ENCODE measurements at regions of chr10 and their contacts with region 1.

Region 1: DNA sequence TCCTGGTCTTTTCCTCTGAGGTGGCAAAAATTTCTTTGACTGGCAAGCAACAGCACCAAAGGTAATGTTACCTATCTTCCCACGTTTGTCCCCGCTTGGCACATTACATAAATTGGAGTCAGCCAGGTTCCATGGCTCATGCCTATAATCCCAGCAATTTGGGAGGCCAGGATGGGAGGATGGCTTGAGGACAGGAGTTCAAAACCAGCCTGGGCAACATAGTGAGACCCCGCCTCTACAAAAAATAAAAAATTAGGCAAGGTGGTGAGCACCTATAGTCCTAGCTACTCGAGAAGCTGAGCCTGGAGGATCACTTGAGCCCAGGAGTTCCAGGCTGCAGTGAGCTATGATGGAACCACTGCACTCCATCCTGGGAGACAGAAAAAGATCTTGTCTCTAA is 139.5 kb downstream of the IDE start:
- DNase-seq: no peak
- H3K4me3 ChIP-seq: no peak overlapping the region
- H3K27ac ChIP-seq: no peak overlapping the region
- H3K4me1 ChIP-seq: no peaks in the 10 kb centered on the region
- H3K27me3 ChIP-seq: no peaks in the 10 kb centered on the region
- CTCF ChIP-seq: no peak

Region 2: GRCh38 chr10:92087750-92088395 is 346.5 kb before region 1 on chr10:
- intact Hi-C with region 1: loop called (anchors 2 kb)
- DNase-seq: peak; percentile 76
- H3K4me3 ChIP-seq: no peak overlapping the region
- H3K27ac ChIP-seq: no peak overlapping the region
- H3K4me1 ChIP-seq: no peaks in the 10 kb centered on the region
- H3K27me3 ChIP-seq: no peaks in the 10 kb centered on the region
- CTCF ChIP-seq: peak; percentile 61

Region 3: GRCh38 chr10:92350411-92350810 is 84.0 kb before region 1 on chr10:
- intact Hi-C with region 1: no loop called
- DNase-seq: no peak
- H3K4me3 ChIP-seq: no peak overlapping the region
- H3K27ac ChIP-seq: no peak overlapping the region
- H3K4me1 ChIP-seq: no peaks in the 10 kb centered on the region
- H3K27me3 ChIP-seq: no peaks in the 10 kb centered on the region
- CTCF ChIP-seq: no peak

Region 4: GRCh38 chr10:93280699-93281366 is 846.4 kb after region 1 on chr10:
- intact Hi-C with region 1: no loop called
- DNase-seq: no peak
- H3K4me3 ChIP-seq: no peak overlapping the region
- H3K27ac ChIP-seq: no peak overlapping the region
- H3K4me1 ChIP-seq: no peaks in the 10 kb centered on the region
- H3K27me3 ChIP-seq: no peaks in the 10 kb centered on the region
- CTCF ChIP-seq: no peak